Activated T-helper 2 cell treated with anti-CD3 and anti-CD28 coated beads, Interferon-gamma antibody, Interleukin-2, Interleukin-4, amounts not matched to agents 10 μg/mL and 5 μg/mL and 100 μg/mL, durations not matched to agents 14 hours and 24 hours and 36 hours (primary cell): ENCODE measurements at regions of chr18 and their contacts with region 1.

Region 1: GRCh38 chr18:45910405-45911023 is 56.6 kb downstream of the EPG5 start:
- DNase-seq: peak; percentile 27
- H3K4me3 Mint-ChIP-seq: no peak overlapping the region
- H3K27ac Mint-ChIP-seq: no peak overlapping the region
- H3K4me1 Mint-ChIP-seq: no peaks in the 10 kb centered on the region
- H3K27me3 Mint-ChIP-seq: no peaks in the 10 kb centered on the region

Region 2: GRCh38 chr18:45621061-45621511 is 289.4 kb before region 1 on chr18:
- intact Hi-C with region 1: loop called (anchors 1 kb)
- DNase-seq: no peak
- H3K4me3 Mint-ChIP-seq: no peak overlapping the region
- H3K27ac Mint-ChIP-seq: no peak overlapping the region
- H3K4me1 Mint-ChIP-seq: no peaks in the 10 kb centered on the region
- H3K27me3 Mint-ChIP-seq: peaks cover 17% of the 10 kb centered on the region

Region 3: GRCh38 chr18:45793306-45793965 is 117.1 kb before region 1 on chr18:
- intact Hi-C with region 1: no loop called
- DNase-seq: no peak
- H3K4me3 Mint-ChIP-seq: no peak overlapping the region
- H3K27ac Mint-ChIP-seq: no peak overlapping the region
- H3K4me1 Mint-ChIP-seq: no peaks in the 10 kb centered on the region
- H3K27me3 Mint-ChIP-seq: peaks cover 2% of the 10 kb centered on the region

Region 4: DNA sequence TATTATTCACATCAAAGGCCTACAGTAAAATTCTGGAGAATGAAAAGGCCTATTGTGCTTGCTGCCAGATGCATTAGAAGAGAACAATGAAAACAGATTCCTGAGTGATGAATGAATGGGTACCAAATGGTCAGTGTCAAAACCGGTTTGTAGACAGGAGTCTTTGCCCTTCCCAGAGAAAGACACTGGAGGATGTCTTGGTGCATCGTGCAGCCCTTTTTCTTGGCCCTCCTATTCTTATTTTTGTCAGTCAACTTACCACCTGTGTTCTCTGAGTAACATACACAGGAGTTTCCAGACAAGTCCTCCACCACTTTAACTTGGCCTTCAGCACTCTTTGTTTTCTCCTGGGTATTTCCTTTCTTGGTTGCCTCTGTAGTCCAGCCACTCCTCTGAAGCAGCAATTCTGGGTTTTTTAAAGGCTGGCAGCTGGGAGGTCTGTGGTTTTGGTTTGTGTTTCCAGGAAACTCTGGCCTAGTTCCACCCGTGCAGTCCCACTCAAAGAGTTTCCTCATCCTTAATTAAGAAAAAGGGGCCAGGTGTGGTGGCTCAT is 132.1 kb after region 1 on chr18:
- intact Hi-C with region 1: no loop called
- DNase-seq: peak; percentile 17
- H3K4me3 Mint-ChIP-seq: no peak overlapping the region
- H3K27ac Mint-ChIP-seq: peak overlapping the region; percentile 5
- H3K4me1 Mint-ChIP-seq: peaks cover 40% of the 10 kb centered on the region
- H3K27me3 Mint-ChIP-seq: no peaks in the 10 kb centered on the region

Region 5: GRCh38 chr18:46054956-46055837 is 144.7 kb after region 1 on chr18:
- intact Hi-C with region 1: no loop called
- DNase-seq: no peak
- H3K4me3 Mint-ChIP-seq: peak overlapping the region; percentile 54
- H3K27ac Mint-ChIP-seq: peak overlapping the region; percentile 85
- H3K4me1 Mint-ChIP-seq: peaks cover 46% of the 10 kb centered on the region
- H3K27me3 Mint-ChIP-seq: no peaks in the 10 kb centered on the region

Region 6: GRCh38 chr18:46073474-46074331 is 163.2 kb after region 1 on chr18:
- intact Hi-C with region 1: no loop called
- DNase-seq: peak; percentile 38
- H3K4me3 Mint-ChIP-seq: no peak overlapping the region
- H3K27ac Mint-ChIP-seq: peak overlapping the region; percentile 20
- H3K4me1 Mint-ChIP-seq: peaks cover 39% of the 10 kb centered on the region
- H3K27me3 Mint-ChIP-seq: no peaks in the 10 kb centered on the region